ENCODE measurements at regions of chr20 and their contacts with region 1.

Region 1: GRCh38 chr20:61530670-61531295 is 278.7 kb downstream of the CDH4 start:
- DNase-seq: peak in 1 of 2 donors; percentile 35
- ATAC-seq: no peak
- H3K4me3 ChIP-seq: no peak overlapping the region
- H3K27ac ChIP-seq: no peak overlapping the region
- H3K4me1 ChIP-seq: no peaks in the 10 kb centered on the region
- H3K27me3 ChIP-seq: no peaks in the 10 kb centered on the region

Region 2: GRCh38 chr20:61279621-61280598 is 250.9 kb before region 1 on chr20:
- intact Hi-C with region 1: no loop called
- DNase-seq: no peak
- ATAC-seq: no peak
- H3K4me3 ChIP-seq: no peak overlapping the region
- H3K27ac ChIP-seq: no peak overlapping the region
- H3K4me1 ChIP-seq: no peaks in the 10 kb centered on the region
- H3K27me3 ChIP-seq: no peaks in the 10 kb centered on the region

Region 3: GRCh38 chr20:61426365-61426764 is 104.4 kb before region 1 on chr20:
- intact Hi-C with region 1: no loop called
- DNase-seq: no peak
- ATAC-seq: no peak
- H3K4me3 ChIP-seq: no peak overlapping the region
- H3K27ac ChIP-seq: no peak overlapping the region
- H3K4me1 ChIP-seq: no peaks in the 10 kb centered on the region
- H3K27me3 ChIP-seq: no peaks in the 10 kb centered on the region

Region 4: GRCh38 chr20:61436678-61437279 is 94.0 kb before region 1 on chr20:
- intact Hi-C with region 1: no loop called
- DNase-seq: no peak
- ATAC-seq: no peak
- H3K4me3 ChIP-seq: no peak overlapping the region
- H3K27ac ChIP-seq: no peak overlapping the region
- H3K4me1 ChIP-seq: no peaks in the 10 kb centered on the region
- H3K27me3 ChIP-seq: no peaks in the 10 kb centered on the region

Region 5: GRCh38 chr20:61599061-61599531 is 68.3 kb after region 1 on chr20:
- intact Hi-C with region 1: loop called in 1 of 2 experiments (anchors 10 kb)
- DNase-seq: peak in 1 of 2 donors; percentile 60
- ATAC-seq: no peak
- H3K4me3 ChIP-seq: no peak overlapping the region
- H3K27ac ChIP-seq: no peak overlapping the region
- H3K4me1 ChIP-seq: no peaks in the 10 kb centered on the region
- H3K27me3 ChIP-seq: no peaks in the 10 kb centered on the region